HEK293 (cell line): ENCODE measurements at regions of chr5 and their contacts with region 1.

Region 1: DNA sequence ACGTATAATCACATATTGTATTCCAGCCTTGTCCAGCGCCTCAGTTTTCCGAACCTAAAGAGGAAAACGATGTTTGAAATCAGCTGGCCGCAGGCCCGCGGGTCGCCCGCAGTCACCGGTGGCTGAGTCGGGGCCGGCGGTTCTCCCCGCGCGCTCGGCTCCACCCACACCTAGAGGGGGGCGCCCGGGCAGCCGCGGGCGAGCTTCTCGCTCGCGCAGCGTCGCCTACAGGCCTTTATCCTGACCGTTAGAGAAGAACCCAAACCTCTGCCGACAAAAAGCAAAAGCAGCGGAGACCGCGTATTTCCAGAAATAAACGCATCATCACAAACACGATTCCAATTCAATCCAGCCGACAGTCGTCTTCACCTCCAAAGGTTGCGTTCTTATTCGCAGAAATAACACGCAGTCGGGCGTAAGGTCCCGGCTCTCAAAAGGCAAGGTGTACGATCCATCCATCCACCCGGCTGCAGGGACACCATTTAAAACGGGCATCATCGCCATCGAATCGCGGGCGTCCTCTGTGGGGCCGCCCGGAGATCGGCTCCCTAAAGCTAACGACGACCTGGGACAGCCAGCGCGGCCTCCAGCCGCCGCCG is 680 bp upstream of the NIPBL start:
- H3K4me3 ChIP-seq: peak overlapping the region; percentile 95
- H3K27ac ChIP-seq: peak overlapping the region; percentile 99
- H3K4me1 ChIP-seq: peaks cover 18% of the 10 kb centered on the region
- CTCF ChIP-seq: peak; percentile 92

Region 2: DNA sequence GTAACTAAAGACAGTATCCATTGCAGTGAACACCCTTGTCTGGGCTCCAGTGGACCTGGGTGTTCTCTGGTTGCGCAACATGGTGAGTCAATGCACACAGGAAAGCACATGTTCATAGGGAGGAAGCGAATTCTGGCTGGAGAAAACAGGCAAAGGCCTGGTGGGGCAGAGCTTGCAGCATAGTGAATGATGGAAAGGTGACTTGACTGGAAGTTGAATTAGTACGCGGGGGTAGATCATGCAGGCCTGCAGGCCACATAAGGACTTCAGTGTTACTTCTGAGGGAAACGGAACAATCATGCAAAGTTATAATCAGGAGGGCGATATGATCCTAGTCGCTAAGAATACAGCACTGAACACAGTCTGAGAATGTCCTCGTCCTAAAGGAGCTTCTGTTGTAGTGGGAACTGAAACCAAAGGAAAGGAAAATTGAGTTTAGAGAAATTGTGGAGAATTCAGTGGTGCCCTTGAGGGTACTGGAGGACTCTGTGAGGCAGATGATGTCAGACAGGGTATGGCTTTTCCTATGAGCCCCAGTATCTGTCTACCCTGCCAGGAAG is 502.3 kb before region 1 on chr5:
- CTCF ChIA-PET with region 1: no interaction called
- POLR2A ChIA-PET with region 1: no interaction called
- H3K4me3 ChIP-seq: no peak overlapping the region
- H3K27ac ChIP-seq: no peak overlapping the region
- H3K4me1 ChIP-seq: peaks cover 9% of the 10 kb centered on the region
- CTCF ChIP-seq: no peak

Region 3: GRCh38 chr5:36944607-36945225 is 68.8 kb after region 1 on chr5:
- CTCF ChIA-PET with region 1: interaction called, 7 read pairs
- POLR2A ChIA-PET with region 1: interaction called, 13 read pairs
- H3K4me3 ChIP-seq: no peak overlapping the region
- H3K27ac ChIP-seq: no peak overlapping the region
- H3K4me1 ChIP-seq: peaks cover 56% of the 10 kb centered on the region
- CTCF ChIP-seq: no peak

Region 4: GRCh38 chr5:37043688-37044087 is 167.8 kb after region 1 on chr5:
- CTCF ChIA-PET with region 1: no interaction called
- POLR2A ChIA-PET with region 1: no interaction called
- H3K4me3 ChIP-seq: no peak overlapping the region
- H3K27ac ChIP-seq: no peak overlapping the region
- H3K4me1 ChIP-seq: no peaks in the 10 kb centered on the region; the same call in 1 of the 2 replicates
- CTCF ChIP-seq: no peak